ENCODE measurements at regions of chr5 and their contacts with region 1.

Region 1: GRCh38 chr5:170278611-170279452 is 18.7 kb downstream of the LCP2 start:
- DNase-seq: peak; percentile 76 to 97 (median 88)
- ATAC-seq: peak; percentile 67
- H3K4me3 ChIP-seq: peak overlapping the region; percentile 28 to 40
- H3K4me3 Mint-ChIP-seq: peak overlapping the region; percentile 78
- H3K27ac ChIP-seq: peak overlapping the region; percentile 36 to 76
- H3K27ac Mint-ChIP-seq: peak overlapping the region; percentile 97
- H3K4me1 ChIP-seq: peaks cover 95% of the 10 kb centered on the region
- H3K4me1 Mint-ChIP-seq: peaks cover 97% of the 10 kb centered on the region
- H3K27me3 ChIP-seq: no peaks in the 10 kb centered on the region
- H3K27me3 Mint-ChIP-seq: no peaks in the 10 kb centered on the region
- CTCF ChIP-seq: no peak

Region 2: DNA sequence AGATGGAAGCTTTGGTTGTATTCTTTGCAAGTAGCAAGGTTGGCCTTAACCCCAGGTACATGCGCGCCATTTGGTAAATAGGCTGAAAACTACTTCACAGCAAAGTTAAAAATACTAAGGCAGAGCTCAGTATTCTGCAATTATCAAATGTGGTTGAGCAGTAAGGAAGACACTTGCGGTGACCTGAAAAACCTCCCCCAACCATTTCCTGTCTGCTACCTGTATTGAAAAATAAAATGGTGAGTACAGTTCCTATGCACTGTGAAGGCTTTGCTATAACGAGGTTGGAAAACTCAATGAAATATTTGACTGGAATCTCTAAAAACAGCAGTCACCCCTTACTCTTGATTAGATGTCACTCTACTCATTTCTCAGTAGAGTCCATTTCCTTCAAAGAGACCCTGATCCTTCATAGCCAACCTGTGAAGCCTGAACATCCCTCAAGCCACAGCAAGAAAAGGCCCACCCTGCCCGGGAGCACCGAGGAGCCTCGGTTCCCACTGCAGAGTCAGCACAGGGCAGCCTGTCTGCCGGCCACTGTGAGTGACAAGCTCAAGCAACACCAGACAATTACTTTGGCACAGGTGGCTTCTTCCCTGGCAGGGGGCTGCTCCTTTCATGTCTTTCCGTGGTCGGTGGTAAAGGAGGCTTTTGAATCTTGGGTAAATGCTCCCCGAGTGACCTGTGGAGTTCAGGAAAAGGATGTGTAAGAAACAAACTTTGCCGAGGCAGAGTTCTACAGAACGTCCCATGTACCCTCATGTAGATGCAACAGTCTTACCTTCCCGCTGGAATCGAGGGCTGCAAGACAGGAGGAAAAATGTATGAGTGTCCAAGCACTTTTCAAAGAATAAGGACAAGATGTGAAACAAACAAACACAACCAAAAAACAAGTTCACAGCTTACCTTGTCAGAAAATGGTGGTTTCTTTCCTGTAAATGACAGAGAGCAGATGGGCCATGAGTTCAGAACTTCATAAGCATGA is 16.5 kb before region 1 on chr5:
- CTCF ChIA-PET with region 1: interaction called, 70 read pairs
- POLR2A ChIA-PET with region 1: interaction called, 75 read pairs
- intact Hi-C with region 1: loop called (anchors 1 to 2 kb)
- DNase-seq: peak in 6 of 9 experiments; percentile 43 to 87 (median 67)
- ATAC-seq: peak; percentile 77
- H3K4me3 ChIP-seq: peak overlapping the region in 1 of 2 experiments; percentile 11
- H3K4me3 Mint-ChIP-seq: peak overlapping the region; percentile 74
- H3K27ac ChIP-seq: peak overlapping the region; percentile 45 to 62
- H3K27ac Mint-ChIP-seq: peak overlapping the region; percentile 98
- H3K4me1 ChIP-seq: peaks cover 81% of the 10 kb centered on the region
- H3K4me1 Mint-ChIP-seq: peaks cover 96% of the 10 kb centered on the region
- H3K27me3 ChIP-seq: no peaks in the 10 kb centered on the region
- H3K27me3 Mint-ChIP-seq: no peaks in the 10 kb centered on the region
- CTCF ChIP-seq: no peak

Region 3: GRCh38 chr5:170293273-170293672 is 14.4 kb after region 1 on chr5:
- CTCF ChIA-PET with region 1: interaction called, 385 read pairs
- POLR2A ChIA-PET with region 1: interaction called, 494 read pairs
- intact Hi-C with region 1: loop called (anchors 1 to 2 kb)
- DNase-seq: peak in 6 of 9 experiments; percentile 53 to 86 (median 72)
- ATAC-seq: peak; percentile 29
- H3K4me3 ChIP-seq: peak overlapping the region; percentile 87 to 94
- H3K4me3 Mint-ChIP-seq: peak overlapping the region; percentile 99
- H3K27ac ChIP-seq: peak overlapping the region in 1 of 2 experiments; percentile 86
- H3K27ac Mint-ChIP-seq: peak overlapping the region; percentile 97
- H3K4me1 ChIP-seq: peaks cover 73% of the 10 kb centered on the region
- H3K4me1 Mint-ChIP-seq: peaks cover 82% of the 10 kb centered on the region
- H3K27me3 ChIP-seq: no peaks in the 10 kb centered on the region
- H3K27me3 Mint-ChIP-seq: no peaks in the 10 kb centered on the region
- CTCF ChIP-seq: no peak

Region 4: GRCh38 chr5:170319301-170319700 is 40.5 kb after region 1 on chr5:
- CTCF ChIA-PET with region 1: interaction called, 26 read pairs
- POLR2A ChIA-PET with region 1: interaction called, 5 read pairs
- intact Hi-C with region 1: no loop called
- DNase-seq: no peak
- ATAC-seq: peak; percentile 58
- H3K4me3 ChIP-seq: no peak overlapping the region
- H3K4me3 Mint-ChIP-seq: no peak overlapping the region
- H3K27ac ChIP-seq: no peak overlapping the region
- H3K27ac Mint-ChIP-seq: peak overlapping the region; percentile 32
- H3K4me1 ChIP-seq: peaks cover 13% of the 10 kb centered on the region
- H3K4me1 Mint-ChIP-seq: peaks cover 42% of the 10 kb centered on the region
- H3K27me3 ChIP-seq: no peaks in the 10 kb centered on the region
- H3K27me3 Mint-ChIP-seq: no peaks in the 10 kb centered on the region
- CTCF ChIP-seq: no peak

Region 5: DNA sequence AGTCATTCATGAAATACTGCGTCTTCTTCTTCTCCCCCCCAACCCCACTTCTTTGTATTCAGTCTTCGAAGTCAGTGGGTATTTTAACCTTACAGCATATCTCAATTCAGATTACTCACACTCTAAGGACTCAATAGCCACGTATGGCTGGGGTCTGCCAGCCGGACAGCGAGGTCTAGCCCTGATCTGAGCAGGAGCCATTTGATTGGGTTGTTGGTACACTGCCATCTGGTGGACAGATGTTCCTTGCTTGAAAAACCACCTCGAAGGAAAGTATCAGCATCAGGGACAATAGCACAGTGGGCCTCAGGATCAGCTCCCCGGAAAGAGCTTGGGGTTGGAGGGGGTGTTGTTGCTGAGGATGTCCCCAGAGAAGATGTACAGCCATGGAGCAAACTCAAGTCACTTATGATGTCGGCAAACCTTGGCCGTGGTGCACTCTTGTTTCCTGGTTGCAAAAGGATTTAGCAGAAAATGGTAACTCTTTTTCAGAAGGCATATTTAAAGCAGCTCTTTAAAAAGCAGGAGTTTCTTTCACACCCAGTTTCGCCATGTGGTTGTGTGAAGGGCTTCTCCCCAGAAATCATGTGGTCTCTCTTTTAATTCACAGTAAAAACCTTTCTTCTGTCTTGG is 142.1 kb after region 1 on chr5:
- CTCF ChIA-PET with region 1: interaction called, 8 read pairs
- POLR2A ChIA-PET with region 1: no interaction called
- intact Hi-C with region 1: loop called in 1 of 2 experiments (anchors 2 kb)
- DNase-seq: peak; percentile 22 to 75 (median 48)
- ATAC-seq: peak; percentile 58
- H3K4me3 ChIP-seq: no peak overlapping the region
- H3K4me3 Mint-ChIP-seq: no peak overlapping the region
- H3K27ac ChIP-seq: no peak overlapping the region
- H3K27ac Mint-ChIP-seq: no peak overlapping the region
- H3K4me1 ChIP-seq: peaks cover 18% of the 10 kb centered on the region
- H3K4me1 Mint-ChIP-seq: peaks cover 25% of the 10 kb centered on the region
- H3K27me3 ChIP-seq: no peaks in the 10 kb centered on the region
- H3K27me3 Mint-ChIP-seq: no peaks in the 10 kb centered on the region
- CTCF ChIP-seq: peak; percentile 79